Endothelial cell of umbilical vein (primary cell): ENCODE measurements at regions of chr17 and their contacts with region 1.

Region 1: DNA sequence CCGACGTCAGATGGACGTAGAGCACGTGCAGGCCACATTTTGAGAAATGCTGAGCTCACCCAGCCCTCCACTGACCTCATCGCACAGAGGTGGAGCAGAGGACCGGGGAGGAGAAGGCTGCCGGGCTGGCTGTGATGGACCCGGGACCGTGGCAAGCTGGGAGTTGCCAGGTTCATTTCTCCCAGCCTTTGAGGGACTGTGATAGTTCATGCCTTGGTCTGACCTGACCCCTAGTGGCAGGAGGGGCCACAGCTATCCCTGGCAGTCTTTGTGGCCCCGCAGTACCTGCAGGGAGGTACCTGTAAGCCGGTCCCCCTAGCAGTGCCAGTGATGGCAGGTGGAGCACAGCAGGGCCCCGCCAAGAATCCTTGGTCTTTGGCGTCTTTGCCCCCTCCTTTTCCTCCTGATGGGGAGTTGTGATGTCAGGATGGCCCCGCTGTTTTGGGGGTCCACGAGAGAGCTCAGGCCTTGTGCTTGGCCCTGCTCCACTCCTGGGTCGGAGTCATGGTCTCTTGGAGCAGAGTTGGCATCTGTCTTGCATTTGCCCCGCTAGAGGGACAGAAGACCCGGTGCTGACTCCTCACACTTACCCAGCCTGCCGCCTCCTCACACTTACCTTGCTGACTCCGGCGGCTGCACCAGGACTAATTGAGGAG is 50.4 kb downstream of the OR1D5 start:
- DNase-seq: peak; percentile 62
- H3K4me3 ChIP-seq: no peak overlapping the region
- H3K27ac ChIP-seq: no peak overlapping the region
- H3K4me1 ChIP-seq: no peaks in the 10 kb centered on the region
- H3K27me3 ChIP-seq: no peaks in the 10 kb centered on the region
- CTCF ChIP-seq: peak; percentile 70 to 85
- POLR2A ChIP-seq: no peak

Region 2: GRCh38 chr17:2786176-2786881 is 226.7 kb before region 1 on chr17:
- CTCF ChIA-PET with region 1: interaction called, 25 read pairs
- POLR2A ChIA-PET with region 1: no interaction called
- dilution Hi-C with region 1: no loop called
- intact Hi-C with region 1: loop called (anchors 1 kb)
- DNase-seq: peak; percentile 78
- H3K4me3 ChIP-seq: no peak overlapping the region
- H3K27ac ChIP-seq: no peak overlapping the region
- H3K4me1 ChIP-seq: no peaks in the 10 kb centered on the region
- H3K27me3 ChIP-seq: no peaks in the 10 kb centered on the region
- CTCF ChIP-seq: peak; percentile 87 to 91
- POLR2A ChIP-seq: no peak

Region 3: GRCh38 chr17:2814481-2815341 is 198.3 kb before region 1 on chr17:
- CTCF ChIA-PET with region 1: interaction called, 12 read pairs
- POLR2A ChIA-PET with region 1: no interaction called
- dilution Hi-C with region 1: no loop called
- intact Hi-C with region 1: no loop called
- DNase-seq: no peak
- H3K4me3 ChIP-seq: no peak overlapping the region
- H3K27ac ChIP-seq: no peak overlapping the region
- H3K4me1 ChIP-seq: peaks cover 7% of the 10 kb centered on the region
- H3K27me3 ChIP-seq: no peaks in the 10 kb centered on the region
- CTCF ChIP-seq: no peak
- POLR2A ChIP-seq: no peak

Region 4: GRCh38 chr17:2828397-2829038 is 184.5 kb before region 1 on chr17:
- CTCF ChIA-PET with region 1: interaction called, 139 read pairs
- POLR2A ChIA-PET with region 1: no interaction called
- dilution Hi-C with region 1: no loop called
- intact Hi-C with region 1: loop called (anchors 1 kb)
- DNase-seq: peak; percentile 44
- H3K4me3 ChIP-seq: no peak overlapping the region
- H3K27ac ChIP-seq: no peak overlapping the region
- H3K4me1 ChIP-seq: no peaks in the 10 kb centered on the region
- H3K27me3 ChIP-seq: no peaks in the 10 kb centered on the region
- CTCF ChIP-seq: peak; percentile 73 to 93
- POLR2A ChIP-seq: no peak

Region 5: GRCh38 chr17:2853111-2853721 is 159.8 kb before region 1 on chr17:
- CTCF ChIA-PET with region 1: interaction called, 108 read pairs
- POLR2A ChIA-PET with region 1: no interaction called
- dilution Hi-C with region 1: no loop called
- intact Hi-C with region 1: loop called (anchors 1 kb)
- DNase-seq: no peak
- H3K4me3 ChIP-seq: peak overlapping the region; percentile 24 to 43 (median 40)
- H3K27ac ChIP-seq: no peak overlapping the region
- H3K4me1 ChIP-seq: peaks cover 7% of the 10 kb centered on the region
- H3K27me3 ChIP-seq: peaks cover 37 to 47% of the 10 kb centered on the region in 2 experiments
- CTCF ChIP-seq: no peak
- POLR2A ChIP-seq: no peak

Region 6: GRCh38 chr17:2929881-2930533 is 83.0 kb before region 1 on chr17:
- CTCF ChIA-PET with region 1: interaction called, 51 read pairs
- POLR2A ChIA-PET with region 1: no interaction called
- dilution Hi-C with region 1: no loop called
- intact Hi-C with region 1: loop called (anchors 1 kb)
- DNase-seq: peak; percentile 17
- H3K4me3 ChIP-seq: no peak overlapping the region
- H3K27ac ChIP-seq: no peak overlapping the region
- H3K4me1 ChIP-seq: no peaks in the 10 kb centered on the region
- H3K27me3 ChIP-seq: peaks cover 0 to 4% of the 10 kb centered on the region in 2 experiments
- CTCF ChIP-seq: peak; percentile 53 to 79
- POLR2A ChIP-seq: no peak

Region 7: GRCh38 chr17:2937331-2938003 is 75.6 kb before region 1 on chr17:
- CTCF ChIA-PET with region 1: interaction called, 55 read pairs
- POLR2A ChIA-PET with region 1: no interaction called
- dilution Hi-C with region 1: no loop called
- intact Hi-C with region 1: no loop called
- DNase-seq: peak; percentile 42
- H3K4me3 ChIP-seq: no peak overlapping the region
- H3K27ac ChIP-seq: no peak overlapping the region
- H3K4me1 ChIP-seq: no peaks in the 10 kb centered on the region
- H3K27me3 ChIP-seq: peaks cover 0 to 2% of the 10 kb centered on the region in 2 experiments
- CTCF ChIP-seq: peak in 1 of 2 donors; percentile 26
- POLR2A ChIP-seq: no peak